Right ventricle myocardium inferior (tissue), 1 donor: ENCODE measurements at regions of chr7 and their contacts with region 1.

Region 1: DNA sequence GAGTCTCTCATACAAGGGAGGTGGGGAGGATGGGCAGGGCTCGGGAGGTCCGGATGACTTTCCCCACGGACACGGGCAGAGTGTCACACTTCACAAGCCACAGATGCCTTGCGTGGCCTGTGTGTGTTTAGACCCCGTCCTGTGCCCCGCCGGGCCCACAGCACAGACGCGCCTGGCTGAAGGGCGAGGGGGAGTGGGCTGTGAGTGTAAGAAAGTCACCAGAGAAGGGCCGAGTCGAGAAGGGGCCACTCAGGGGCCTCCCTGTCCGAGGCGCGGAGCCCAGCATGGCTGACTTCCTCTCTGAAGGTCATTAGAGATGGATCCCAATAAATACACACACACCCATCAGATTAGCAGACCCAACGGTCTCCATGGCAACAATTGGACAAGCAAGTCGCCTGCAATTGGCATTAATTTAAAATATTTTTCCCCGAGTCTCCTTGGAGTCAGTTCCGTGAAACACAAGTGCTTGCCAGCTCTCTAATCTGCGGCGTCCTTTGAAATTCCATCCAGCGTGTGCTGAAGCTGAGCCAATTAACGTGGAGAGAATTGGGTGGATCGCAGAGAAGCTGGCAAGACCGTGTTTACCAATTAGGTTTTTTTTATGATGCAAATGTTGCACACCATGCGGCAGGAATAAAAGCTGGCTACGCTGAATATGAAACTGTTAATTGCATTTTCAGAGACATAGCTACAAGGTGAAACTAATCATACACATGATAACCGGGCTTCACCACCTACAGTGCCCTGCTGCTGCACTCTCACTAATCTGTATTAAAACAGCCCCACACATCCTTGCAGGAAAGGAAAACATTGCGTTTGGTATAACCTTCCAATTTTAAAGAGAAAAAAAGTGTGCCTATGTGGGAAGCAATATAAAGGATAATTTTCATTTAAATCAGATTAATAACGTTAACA is 571.2 kb downstream of the PTPRN2 start:
- DNase-seq: no peak
- ATAC-seq: no peak

Region 2: DNA sequence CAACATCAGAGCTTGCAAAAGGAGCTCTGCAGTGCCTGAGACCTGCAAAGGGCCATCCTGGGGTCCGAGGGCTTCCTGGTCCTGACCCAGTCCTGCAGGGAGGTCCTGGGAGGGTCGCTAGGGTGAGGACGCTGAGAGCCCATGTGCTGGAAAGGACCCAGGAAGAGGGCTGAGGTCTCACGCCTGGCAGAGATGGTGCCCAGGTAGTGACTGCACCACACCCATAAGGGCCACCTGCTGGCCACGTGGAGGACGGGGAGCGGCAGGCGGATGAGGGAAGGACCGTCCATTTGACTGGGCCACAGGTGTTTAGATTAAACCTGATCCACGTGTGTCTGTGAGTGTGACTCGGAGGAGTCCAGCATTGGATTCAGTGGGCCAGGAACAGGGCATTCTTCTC is 286.9 kb before region 1 on chr7:
- intact Hi-C with region 1: no loop called
- DNase-seq: no peak
- ATAC-seq: no peak

Region 3: GRCh38 chr7:158077934-158078910 is 61.8 kb after region 1 on chr7:
- intact Hi-C with region 1: no loop called
- DNase-seq: no peak
- ATAC-seq: no peak

Region 4: DNA sequence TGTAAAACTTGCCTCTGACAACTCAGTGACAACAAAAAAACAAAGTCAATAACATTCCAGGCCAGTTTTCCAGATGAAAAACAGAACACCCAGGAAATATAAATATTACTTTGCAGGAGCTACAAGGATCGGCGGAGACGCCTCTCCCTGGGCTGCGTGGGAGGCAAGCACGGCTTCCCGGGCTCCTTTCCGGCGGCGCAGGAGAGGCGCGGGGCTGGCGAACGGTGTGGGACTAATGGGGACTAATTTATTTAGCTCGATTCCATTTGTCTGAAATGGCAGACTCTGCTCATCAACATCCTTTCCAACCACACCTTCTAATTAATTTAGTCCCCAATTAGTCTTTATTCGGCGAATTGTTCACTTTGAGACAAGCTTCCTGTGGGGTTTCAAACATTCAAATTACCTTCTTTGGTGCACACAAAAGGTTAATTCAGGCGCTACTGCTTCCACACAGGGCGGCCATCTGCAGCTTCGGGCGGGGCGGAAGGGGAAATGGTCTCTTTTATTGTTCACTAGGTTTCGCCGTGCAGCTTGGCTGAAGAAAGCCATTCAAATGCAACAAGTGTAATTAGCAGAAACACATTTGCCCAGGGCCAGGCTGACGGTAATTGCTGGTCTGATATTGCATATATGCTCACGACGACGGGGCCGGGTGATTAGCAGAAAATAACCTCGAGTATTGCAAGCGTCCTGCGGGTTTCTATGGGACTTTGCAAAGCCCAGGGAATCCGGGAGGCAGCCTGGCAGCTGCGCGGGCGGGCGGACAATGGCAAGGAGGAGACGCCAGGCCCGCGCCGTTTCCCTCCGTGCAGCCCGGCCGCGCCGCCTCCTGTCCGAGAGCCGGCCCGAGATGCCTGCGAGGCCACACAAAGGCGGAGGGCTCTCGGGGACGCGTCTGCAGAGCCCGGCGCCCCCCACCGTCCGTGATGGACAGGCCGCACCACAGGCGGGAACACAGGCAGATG is 301.1 kb after region 1 on chr7:
- intact Hi-C with region 1: loop called (anchors 5 kb)
- DNase-seq: no peak
- ATAC-seq: no peak